Activated B cell treated with CpG ODN at 0.5 μM for 24 hours (primary cell): ENCODE measurements at regions of chr5 and their contacts with region 1.

Region 1: DNA sequence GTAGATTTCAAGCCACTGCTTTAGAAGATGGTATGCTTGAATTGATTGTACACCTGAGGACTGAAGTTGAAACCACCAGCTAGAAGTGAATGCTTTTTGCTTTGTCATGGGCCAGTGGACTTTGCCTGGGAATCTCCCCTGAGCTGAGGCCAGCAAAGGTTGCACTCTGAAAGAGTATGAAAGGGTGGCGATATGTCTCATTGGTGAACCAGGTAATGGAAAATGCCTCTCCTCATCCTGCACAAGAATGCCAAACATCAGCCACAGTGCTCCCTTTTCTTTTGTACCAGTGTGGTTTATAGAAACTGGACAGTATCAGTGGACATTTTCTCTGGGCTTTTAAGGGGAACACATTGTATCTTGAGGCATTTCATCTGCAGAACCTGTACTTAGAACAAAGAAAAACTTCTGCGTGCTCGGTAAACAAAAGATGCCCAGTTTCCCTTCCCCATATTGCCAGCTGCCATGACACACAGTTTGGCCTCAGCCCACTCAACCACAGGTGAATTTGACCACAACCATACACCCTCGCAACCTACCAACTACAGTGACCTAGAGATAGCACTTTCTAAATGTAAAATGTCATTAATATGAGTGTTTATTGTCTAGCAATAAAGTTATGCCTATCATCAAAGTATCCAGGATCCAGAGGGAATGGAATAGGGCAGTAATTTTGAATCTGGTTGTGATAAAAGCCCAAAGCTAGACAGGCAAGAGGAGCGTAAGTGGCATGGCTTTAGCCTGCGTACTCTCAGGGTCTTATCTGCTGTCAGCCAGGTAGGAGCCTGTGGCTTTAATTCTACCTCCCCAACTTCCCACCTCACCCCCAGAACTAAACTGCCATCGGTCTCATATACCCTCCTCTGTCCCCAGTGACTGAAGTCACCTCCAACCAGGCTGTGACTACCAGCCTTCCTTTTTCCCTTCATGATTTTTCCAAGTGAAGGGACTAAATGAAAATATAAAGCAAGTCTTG is 79.5 kb upstream of the LHFPL2 start:
- DNase-seq: no peak
- ATAC-seq: peak; percentile 87
- H3K4me3 Mint-ChIP-seq: peak overlapping the region; percentile 62
- H3K27ac Mint-ChIP-seq: peak overlapping the region; percentile 87
- H3K4me1 Mint-ChIP-seq: peaks cover 78% of the 10 kb centered on the region
- H3K27me3 Mint-ChIP-seq: no peaks in the 10 kb centered on the region
- CTCF ChIP-seq: no peak

Region 2: GRCh38 chr5:78648359-78649210 is 79.5 kb before region 1 on chr5 and contains the start of gene LHFPL2:
- CTCF ChIA-PET with region 1: no interaction called
- POLR2A ChIA-PET with region 1: interaction called, 21 read pairs
- intact Hi-C with region 1: loop called (anchors 1 kb)
- DNase-seq: peak; percentile 63
- ATAC-seq: peak; percentile 69
- H3K4me3 Mint-ChIP-seq: peak within 1 kb of the TSS; percentile 83
- H3K27ac Mint-ChIP-seq: peak within 1 kb of the TSS; percentile 73
- H3K4me1 Mint-ChIP-seq: peaks cover 25% of the 10 kb centered on the region
- H3K27me3 Mint-ChIP-seq: no peaks in the 10 kb centered on the region
- CTCF ChIP-seq: no peak
- total RNA-seq, gene LHFPL2: 11.0 and 12.0 TPM in 2 replicates

Region 3: DNA sequence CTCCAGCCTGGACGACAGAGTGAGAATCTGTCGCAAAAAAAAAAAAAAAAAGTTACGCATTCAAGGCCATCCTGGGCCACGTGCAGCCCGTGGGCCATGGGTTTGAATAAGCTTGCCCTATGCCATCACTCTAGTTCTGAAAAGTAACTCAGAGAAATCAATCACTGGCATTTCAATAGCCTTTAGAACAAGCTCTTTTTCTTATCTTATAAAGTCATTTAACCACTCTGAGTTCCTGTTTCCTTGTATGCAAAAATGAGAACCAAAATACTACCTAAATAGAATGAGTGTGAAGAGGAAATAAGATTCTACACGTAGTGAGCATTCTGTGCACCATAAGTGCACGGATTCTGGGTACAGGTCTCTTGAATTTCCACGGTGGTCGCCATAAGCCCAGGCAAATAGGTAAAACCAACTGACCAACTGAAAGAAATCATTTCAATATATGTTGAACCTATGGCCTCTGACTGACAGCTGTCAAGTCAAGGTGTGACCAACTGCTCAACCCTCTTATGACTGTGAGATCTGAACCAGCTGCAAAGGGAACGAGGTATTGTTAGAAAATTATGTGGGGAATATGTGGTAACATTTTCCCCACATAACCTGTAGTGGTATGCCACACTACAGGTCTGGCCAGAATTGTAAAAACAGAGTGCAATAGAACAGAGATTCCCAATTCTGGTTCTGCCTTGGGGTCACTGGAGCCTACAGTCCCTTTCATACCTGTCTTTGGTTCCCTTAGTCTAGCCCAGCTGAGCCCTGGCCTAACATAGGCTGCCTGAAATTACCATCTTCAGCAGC is 64.5 kb after region 1 on chr5:
- CTCF ChIA-PET with region 1: no interaction called
- POLR2A ChIA-PET with region 1: interaction called, 10 read pairs
- intact Hi-C with region 1: loop called (anchors 2 kb)
- DNase-seq: no peak
- ATAC-seq: peak; percentile 82
- H3K4me3 Mint-ChIP-seq: peak overlapping the region; percentile 59
- H3K27ac Mint-ChIP-seq: peak overlapping the region; percentile 53
- H3K4me1 Mint-ChIP-seq: peaks cover 63% of the 10 kb centered on the region
- H3K27me3 Mint-ChIP-seq: no peaks in the 10 kb centered on the region
- CTCF ChIP-seq: no peak

Region 4: GRCh38 chr5:78886341-78887230 is 158.5 kb after region 1 on chr5:
- CTCF ChIA-PET with region 1: no interaction called
- POLR2A ChIA-PET with region 1: interaction called, 3 read pairs
- intact Hi-C with region 1: loop called (anchors 2 kb)
- DNase-seq: no peak
- ATAC-seq: no peak
- H3K4me3 Mint-ChIP-seq: no peak overlapping the region
- H3K27ac Mint-ChIP-seq: peak overlapping the region; percentile 2
- H3K4me1 Mint-ChIP-seq: peaks cover 39% of the 10 kb centered on the region
- H3K27me3 Mint-ChIP-seq: no peaks in the 10 kb centered on the region
- CTCF ChIP-seq: peak; percentile 73